GM12878 (cell line): ENCODE measurements at regions of chr5 and their contacts with region 1.

Region 1: DNA sequence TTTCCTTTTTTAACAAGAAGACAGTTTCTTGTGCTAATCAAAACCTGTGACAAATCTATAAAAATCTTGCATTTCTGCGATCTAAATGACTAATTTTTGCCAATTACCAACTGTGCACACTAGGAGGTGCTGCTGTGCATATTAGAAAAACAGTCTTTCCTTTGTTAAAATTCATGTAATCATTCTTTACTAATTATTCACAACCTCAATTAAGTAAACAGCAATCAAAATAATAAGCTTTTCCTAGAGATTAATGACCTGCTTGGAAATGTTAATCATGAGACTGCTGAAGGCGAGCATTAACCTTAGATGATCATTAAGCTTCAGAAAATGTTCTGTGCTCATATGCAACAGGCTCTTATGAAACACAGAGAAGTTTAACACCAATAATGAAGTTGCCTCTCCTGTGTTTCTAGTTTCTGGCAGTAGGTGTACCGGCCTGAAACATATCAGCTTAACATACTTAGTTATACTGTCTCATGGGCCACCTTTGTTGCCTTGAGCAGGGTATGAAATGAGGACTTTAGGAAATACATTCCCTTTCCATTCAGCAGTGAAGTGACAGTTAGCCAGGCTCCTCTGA is 17.7 kb downstream of the RFESD start:
- DNase-seq: peak; percentile 11
- ATAC-seq: peak; percentile 38; the same call in 2 of the 3 replicates
- H3K4me3 ChIP-seq: no peak overlapping the region
- H3K27ac ChIP-seq: no peak overlapping the region
- H3K4me1 ChIP-seq: no peaks in the 10 kb centered on the region
- H3K27me3 ChIP-seq: no peaks in the 10 kb centered on the region
- CTCF ChIP-seq: peak; percentile 66 to 84 (median 80)
- EP300 ChIP-seq: no peak
- POLR2A ChIP-seq: no peak
- RAD21 ChIP-seq: peak; percentile 76

Region 2: DNA sequence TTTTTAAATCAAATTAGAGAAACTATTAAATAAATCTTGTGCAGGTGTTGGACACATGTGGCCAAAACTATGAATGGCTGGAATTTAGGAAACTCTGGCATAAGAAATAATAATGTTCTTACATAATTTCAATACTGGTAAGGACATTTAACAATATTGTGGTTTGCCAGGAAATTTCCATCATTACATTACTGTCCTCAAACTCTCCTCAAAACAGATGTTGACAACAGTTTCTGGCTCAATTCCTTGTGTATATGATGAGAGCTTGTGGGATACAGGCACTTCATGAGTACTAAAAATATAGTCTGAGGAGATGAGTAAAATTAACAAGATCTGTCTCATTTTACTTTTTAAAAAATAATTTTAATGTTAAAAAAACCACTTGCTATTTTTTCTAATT is 407.3 kb before region 1 on chr5:
- CTCF ChIA-PET with region 1: no interaction called
- POLR2A ChIA-PET with region 1: no interaction called
- RAD21 ChIA-PET with region 1: no interaction called
- SMC1A ChIA-PET with region 1: no interaction called
- in situ Hi-C with region 1: no loop called
- intact Hi-C with region 1: no loop called
- DNase-seq: no peak
- ATAC-seq: no peak
- H3K4me3 ChIP-seq: no peak overlapping the region
- H3K27ac ChIP-seq: no peak overlapping the region
- H3K4me1 ChIP-seq: no peaks in the 10 kb centered on the region; the same call in 1 of the 2 replicates
- H3K27me3 ChIP-seq: peaks cover 0 to 3% of the 10 kb centered on the region in 2 experiments; a peak in 1 of 4 replicates
- CTCF ChIP-seq: no peak
- EP300 ChIP-seq: no peak
- POLR2A ChIP-seq: no peak
- RAD21 ChIP-seq: no peak

Region 3: DNA sequence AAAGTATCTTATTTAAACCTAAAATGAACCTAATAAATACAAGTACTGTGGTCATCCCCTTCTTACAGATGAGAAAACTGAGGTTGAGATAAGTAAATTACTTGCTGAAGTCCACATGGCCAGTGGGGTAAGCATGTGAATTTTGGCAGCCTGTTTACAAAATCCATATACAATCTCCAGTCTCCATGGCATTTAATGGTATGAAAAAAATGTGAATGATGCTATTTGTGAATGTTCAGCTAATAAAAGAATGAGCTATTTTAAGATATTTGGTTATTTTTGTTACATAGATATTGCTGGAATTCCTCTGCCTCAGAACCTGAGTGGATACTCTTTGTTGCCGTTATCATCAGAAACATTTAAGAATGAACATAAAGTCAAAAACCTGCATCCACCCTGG is 63.7 kb before region 1 on chr5:
- CTCF ChIA-PET with region 1: no interaction called
- POLR2A ChIA-PET with region 1: no interaction called
- RAD21 ChIA-PET with region 1: no interaction called
- SMC1A ChIA-PET with region 1: no interaction called
- in situ Hi-C with region 1: no loop called
- intact Hi-C with region 1: no loop called
- DNase-seq: no peak
- ATAC-seq: no peak
- H3K4me3 ChIP-seq: no peak overlapping the region
- H3K27ac ChIP-seq: no peak overlapping the region
- H3K4me1 ChIP-seq: no peaks in the 10 kb centered on the region
- H3K27me3 ChIP-seq: no peaks in the 10 kb centered on the region
- CTCF ChIP-seq: no peak
- EP300 ChIP-seq: no peak
- POLR2A ChIP-seq: no peak
- RAD21 ChIP-seq: no peak

Region 4: GRCh38 chr5:95646554-95647431 is 17.5 kb before region 1 on chr5 and contains the start of gene RFESD:
- CTCF ChIA-PET with region 1: interaction called, 42 read pairs
- POLR2A ChIA-PET with region 1: interaction called, 4 read pairs
- RAD21 ChIA-PET with region 1: interaction called, 34 read pairs
- SMC1A ChIA-PET with region 1: interaction called, 23 read pairs
- in situ Hi-C with region 1: no loop called
- intact Hi-C with region 1: no loop called
- DNase-seq: peak; percentile 83
- ATAC-seq: peak; percentile 97
- H3K4me3 ChIP-seq: peak within 1 kb of the TSS; percentile 75
- H3K27ac ChIP-seq: peak within 1 kb of the TSS; percentile 80
- H3K4me1 ChIP-seq: peaks cover 5% of the 10 kb centered on the region
- H3K27me3 ChIP-seq: no peaks in the 10 kb centered on the region
- CTCF ChIP-seq: peak in 2 of 3 experiments; percentile 2 to 9; a peak in 1 of 6 replicates
- EP300 ChIP-seq: no peak
- POLR2A ChIP-seq: peak; percentile 88
- RAD21 ChIP-seq: 0 out of 2 replicates have a peak, but pooled peaks have one; percentile 1
- polyA plus RNA-seq, gene RFESD: 14.0 to 14.7 TPM

Region 5: GRCh38 chr5:95718203-95718602 is 53.9 kb after region 1 on chr5:
- CTCF ChIA-PET with region 1: interaction called, 6 read pairs
- POLR2A ChIA-PET with region 1: no interaction called
- RAD21 ChIA-PET with region 1: interaction called, 14 read pairs
- SMC1A ChIA-PET with region 1: interaction called, 10 read pairs
- in situ Hi-C with region 1: no loop called
- intact Hi-C with region 1: no loop called
- DNase-seq: peak; percentile 84
- ATAC-seq: peak; percentile 92
- H3K4me3 ChIP-seq: peak overlapping the region; percentile 44
- H3K27ac ChIP-seq: peak overlapping the region; percentile 40
- H3K4me1 ChIP-seq: peaks cover 25% of the 10 kb centered on the region
- H3K27me3 ChIP-seq: no peaks in the 10 kb centered on the region
- CTCF ChIP-seq: no peak
- EP300 ChIP-seq: peak; percentile 26 to 72; a peak in 1 of 4 replicates
- POLR2A ChIP-seq: no peak
- RAD21 ChIP-seq: no peak

Region 6: DNA sequence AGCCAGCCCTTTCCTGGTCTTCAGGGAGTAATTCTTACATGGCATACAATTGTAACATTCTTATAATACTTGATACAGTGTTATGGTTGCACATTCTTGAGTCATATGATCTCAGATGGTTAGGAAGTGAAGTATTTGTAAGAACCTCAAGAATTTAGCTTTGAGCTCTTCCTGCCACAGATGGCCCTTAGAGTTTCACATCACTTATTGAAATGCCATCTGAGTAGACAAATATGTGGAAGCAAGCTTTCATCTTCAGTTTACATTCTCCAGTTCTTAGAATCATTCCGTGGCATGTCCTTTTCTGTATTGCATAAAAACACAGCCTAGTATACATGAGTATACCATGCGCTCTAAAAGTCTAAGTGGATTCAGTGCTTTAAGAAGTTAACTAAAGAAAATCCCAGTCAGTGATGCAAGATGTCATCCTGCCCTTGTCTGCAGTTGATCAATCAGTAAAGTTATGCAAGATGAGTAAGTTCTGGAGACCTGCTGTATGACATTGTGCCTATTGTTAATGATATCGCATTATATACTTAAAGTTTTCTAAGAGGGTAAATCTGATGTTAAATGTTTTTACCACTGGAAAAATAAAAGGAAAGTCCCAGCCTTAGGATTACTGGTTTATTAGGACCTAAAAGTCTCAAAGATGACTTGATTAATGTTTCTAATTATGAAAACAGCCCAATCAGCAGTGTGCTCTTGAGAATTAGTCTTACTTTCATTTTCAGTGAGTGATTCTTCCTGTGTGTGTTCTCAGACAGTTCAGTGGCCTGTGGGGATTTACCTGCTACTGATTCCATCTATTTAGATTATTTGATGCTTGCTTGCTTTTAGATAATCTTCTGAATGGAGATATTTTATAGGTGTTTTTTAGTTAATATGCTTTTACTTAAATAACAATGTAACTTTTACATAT is 96.2 kb after region 1 on chr5:
- CTCF ChIA-PET with region 1: interaction called, 35 read pairs
- POLR2A ChIA-PET with region 1: interaction called, 4 read pairs
- RAD21 ChIA-PET with region 1: interaction called, 5 read pairs
- SMC1A ChIA-PET with region 1: interaction called, 15 read pairs
- in situ Hi-C with region 1: no loop called
- intact Hi-C with region 1: loop called (anchors 1 kb)
- DNase-seq: peak; percentile 64
- ATAC-seq: peak; percentile 97
- H3K4me3 ChIP-seq: peak overlapping the region; percentile 56
- H3K27ac ChIP-seq: peak overlapping the region; percentile 94
- H3K4me1 ChIP-seq: peaks cover 16% of the 10 kb centered on the region
- H3K27me3 ChIP-seq: no peaks in the 10 kb centered on the region
- CTCF ChIP-seq: no peak
- EP300 ChIP-seq: peak; percentile 3 to 71; a peak in 1 of 4 replicates
- POLR2A ChIP-seq: no peak
- RAD21 ChIP-seq: no peak

Region 7: GRCh38 chr5:95822542-95823181 is 158.4 kb after region 1 on chr5 and contains the start of gene GLRX:
- CTCF ChIA-PET with region 1: interaction called, 7 read pairs
- POLR2A ChIA-PET with region 1: no interaction called
- RAD21 ChIA-PET with region 1: no interaction called
- SMC1A ChIA-PET with region 1: interaction called, 12 read pairs
- in situ Hi-C with region 1: no loop called
- intact Hi-C with region 1: no loop called
- DNase-seq: no peak
- ATAC-seq: peak; percentile 66
- H3K4me3 ChIP-seq: peak within 1 kb of the TSS; percentile 87
- H3K27ac ChIP-seq: peak within 1 kb of the TSS; percentile 86
- H3K4me1 ChIP-seq: peaks cover 26% of the 10 kb centered on the region
- H3K27me3 ChIP-seq: no peaks in the 10 kb centered on the region
- CTCF ChIP-seq: no peak
- EP300 ChIP-seq: 0 out of 4 replicates have a peak, but pooled peaks of 1 of the 2 experiments have one; percentile 33
- POLR2A ChIP-seq: peak; percentile 69
- RAD21 ChIP-seq: no peak
- polyA plus RNA-seq, gene GLRX: 311 to 366 TPM

Region 8: GRCh38 chr5:95915999-95916686 is 251.8 kb after region 1 on chr5:
- CTCF ChIA-PET with region 1: no interaction called
- POLR2A ChIA-PET with region 1: no interaction called
- RAD21 ChIA-PET with region 1: no interaction called
- SMC1A ChIA-PET with region 1: no interaction called
- in situ Hi-C with region 1: no loop called
- intact Hi-C with region 1: no loop called
- DNase-seq: no peak
- ATAC-seq: peak; percentile 79
- H3K4me3 ChIP-seq: no peak overlapping the region
- H3K27ac ChIP-seq: peak overlapping the region; percentile 20; the same call in 1 of the 2 replicates
- H3K4me1 ChIP-seq: peaks cover 38% of the 10 kb centered on the region
- H3K27me3 ChIP-seq: no peaks in the 10 kb centered on the region
- CTCF ChIP-seq: no peak
- EP300 ChIP-seq: no peak
- POLR2A ChIP-seq: no peak
- RAD21 ChIP-seq: no peak